Activated CD4-positive, alpha-beta memory T cell treated with anti-CD3 and anti-CD28 coated beads for 36 hours (primary cell): ENCODE measurements at regions of chrX and their contacts with region 1.

Region 1: GRCh38 chrX:151396825-151397740 is at the start of gene VMA21:
- DNase-seq: peak; percentile 89
- H3K4me3 Mint-ChIP-seq: peak within 1 kb of the TSS; percentile 89
- H3K27ac Mint-ChIP-seq: peak within 1 kb of the TSS; percentile 96
- H3K4me1 Mint-ChIP-seq: peaks cover 45% of the 10 kb centered on the region
- H3K27me3 Mint-ChIP-seq: no peaks in the 10 kb centered on the region
- total RNA-seq, gene VMA21: 39.9 to 43.6 TPM

Region 2: DNA sequence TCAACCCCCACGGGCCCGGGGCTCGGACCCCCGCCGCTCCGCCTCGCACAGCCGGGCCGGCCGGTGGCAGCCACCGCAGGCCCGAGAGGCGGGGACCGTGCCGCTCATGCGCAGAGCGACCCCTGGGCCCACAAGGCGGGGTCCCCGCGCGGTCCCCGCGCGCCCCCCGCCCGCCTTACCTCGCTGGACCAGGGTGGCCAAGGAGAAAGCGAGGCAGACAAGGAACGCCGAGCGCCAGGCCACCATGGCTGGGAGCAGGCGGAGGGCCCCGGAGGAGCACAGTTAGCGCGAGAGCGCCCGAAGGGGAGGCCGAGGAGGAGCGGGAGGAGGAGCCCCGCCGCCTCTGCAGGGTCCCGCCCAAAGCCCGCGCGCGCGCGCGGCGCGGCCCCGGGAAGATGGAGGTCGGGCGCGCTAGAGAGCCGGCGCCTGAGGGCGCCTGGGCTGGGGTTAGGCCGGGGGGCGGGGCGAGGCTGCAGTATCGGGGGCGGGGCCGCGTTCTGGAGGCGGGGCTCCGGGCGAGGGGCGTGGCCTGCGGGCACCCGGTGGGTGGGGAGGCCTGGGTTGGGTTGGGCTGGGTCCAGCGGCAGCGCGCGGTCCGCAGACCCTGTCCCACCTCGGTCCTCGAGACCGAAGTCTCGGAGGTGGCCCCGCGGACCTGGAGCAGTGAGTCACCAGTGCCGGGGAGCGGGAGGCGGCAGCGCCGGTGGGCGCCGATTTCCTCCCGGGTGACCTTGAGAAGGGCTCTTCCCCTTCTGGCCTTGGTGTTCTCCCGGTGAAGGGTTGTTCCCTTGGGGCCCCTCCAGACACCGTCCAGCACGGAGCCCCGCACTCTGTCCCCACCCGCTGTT is 498.5 kb before region 1 on chrX and contains the start of gene CD99L2:
- CTCF ChIA-PET with region 1: no interaction called
- POLR2A ChIA-PET with region 1: interaction called, 5 read pairs
- intact Hi-C with region 1: loop called (anchors 5 kb)
- DNase-seq: peak; percentile 93
- H3K4me3 Mint-ChIP-seq: peak within 1 kb of the TSS; percentile 77
- H3K27ac Mint-ChIP-seq: peak within 1 kb of the TSS; percentile 49
- H3K4me1 Mint-ChIP-seq: peaks cover 13% of the 10 kb centered on the region
- H3K27me3 Mint-ChIP-seq: no peaks in the 10 kb centered on the region
- total RNA-seq, gene CD99L2: 14.9 to 15.7 TPM